ENCODE measurements at regions of chr7 and their contacts with region 1.

Region 1: GRCh38 chr7:129401967-129402860 is 32.0 kb upstream of the STRIP2 start:
- DNase-seq: no peak
- ATAC-seq: no peak
- H3K4me3 ChIP-seq: no peak overlapping the region
- H3K27ac ChIP-seq: peak overlapping the region in 1 of 12 donors; percentile 26
- H3K4me1 ChIP-seq: peaks cover 0 to 10% (median 0%) of the 10 kb centered on the region in 12 donors
- H3K27me3 ChIP-seq: no peaks in the 10 kb centered on the region
- CTCF ChIP-seq: peak in 2 of 12 donors; percentile 7 to 10
- POLR2A ChIP-seq: no peak

Region 2: GRCh38 chr7:129240119-129240815 is 161.9 kb before region 1 on chr7:
- intact Hi-C with region 1: no loop called
- DNase-seq: no peak
- ATAC-seq: no peak
- H3K4me3 ChIP-seq: no peak overlapping the region
- H3K27ac ChIP-seq: no peak overlapping the region
- H3K4me1 ChIP-seq: no peaks in the 10 kb centered on the region
- H3K27me3 ChIP-seq: no peaks in the 10 kb centered on the region
- CTCF ChIP-seq: no peak
- POLR2A ChIP-seq: no peak

Region 3: DNA sequence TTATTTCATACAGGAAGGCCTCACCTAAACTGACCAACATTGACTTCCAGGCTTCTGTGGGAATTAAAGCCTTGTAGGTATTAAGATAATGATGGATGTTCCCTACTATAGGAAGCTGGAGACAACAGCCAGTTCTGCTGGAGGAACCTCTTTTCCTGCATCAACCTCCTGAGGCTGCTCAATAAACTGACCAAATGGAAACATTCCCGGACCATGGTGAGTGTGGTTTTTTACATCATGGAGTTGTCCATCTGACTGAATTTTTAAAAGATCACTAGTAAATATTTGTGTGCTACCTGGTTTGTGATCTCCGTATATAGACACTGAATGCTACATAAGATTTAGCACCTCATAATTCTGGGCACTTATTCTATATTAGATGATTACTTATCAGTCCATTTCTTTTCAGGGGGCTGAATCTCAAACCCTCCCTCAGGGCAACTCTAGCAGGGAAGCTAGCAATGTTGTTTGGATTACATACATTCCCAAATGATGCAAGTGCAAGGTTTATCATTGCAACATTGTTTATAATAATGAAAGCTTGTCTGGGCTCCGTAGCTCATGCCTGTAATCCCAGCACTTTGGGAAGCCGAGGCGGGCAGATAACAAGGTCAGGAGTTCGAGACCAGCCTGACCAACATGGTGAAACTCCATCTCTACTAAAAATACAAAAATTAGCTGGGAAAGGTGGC is 78.6 kb after region 1 on chr7:
- intact Hi-C with region 1: loop called in 1 of 10 experiments (anchors 5 kb)
- DNase-seq: no peak
- ATAC-seq: no peak
- H3K4me3 ChIP-seq: no peak overlapping the region
- H3K27ac ChIP-seq: no peak overlapping the region
- H3K4me1 ChIP-seq: no peaks in the 10 kb centered on the region
- H3K27me3 ChIP-seq: no peaks in the 10 kb centered on the region
- CTCF ChIP-seq: no peak
- POLR2A ChIP-seq: no peak

Measured in heart left ventricle (tissue), 16 donors.